Adrenal gland (tissue), 19 donors: ENCODE measurements at regions of chr17 and their contacts with region 1.

Region 1: DNA sequence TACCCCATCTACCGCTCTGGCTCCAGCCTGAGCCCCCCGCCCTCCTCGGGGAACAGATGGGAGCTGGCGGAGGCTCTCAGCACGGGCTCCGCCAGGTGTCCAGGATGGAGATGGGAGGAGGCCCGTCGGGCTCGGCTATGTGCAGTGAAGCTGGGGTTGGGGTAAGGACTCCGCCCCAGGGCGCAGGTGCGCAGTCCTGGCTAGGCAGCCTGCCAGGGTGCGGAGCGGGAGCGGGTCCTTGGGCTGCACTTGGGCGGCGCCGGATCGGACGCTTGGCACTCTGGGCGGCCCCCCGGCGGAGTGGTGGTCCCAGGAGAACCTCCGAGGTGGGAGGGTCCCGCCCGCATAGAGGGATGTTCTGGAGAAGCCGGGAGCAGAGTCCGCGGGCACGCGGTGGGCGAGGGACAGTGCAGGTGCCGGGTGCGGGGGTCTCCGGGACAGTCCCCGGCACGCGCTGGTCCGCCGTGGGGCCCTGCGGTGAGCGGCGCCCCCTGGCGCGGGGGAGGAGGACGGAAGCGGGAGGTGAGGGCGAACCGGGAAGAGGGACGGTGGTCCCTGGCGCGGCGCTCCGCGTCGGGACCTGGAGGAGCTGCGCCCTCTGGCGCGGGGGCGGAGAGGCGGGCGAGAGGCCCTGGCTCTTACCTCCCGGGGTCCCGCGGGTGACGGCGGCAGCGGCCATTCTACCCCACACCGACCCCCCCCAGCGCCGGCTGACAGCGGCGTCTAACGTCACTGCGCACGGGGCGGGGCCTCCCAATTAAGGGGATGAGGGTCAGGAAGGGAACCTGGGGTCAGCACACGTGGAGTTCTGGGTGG is at the start of gene CAMTA2:
- DNase-seq: peak; percentile 81 to 91 (median 86)
- H3K4me3 ChIP-seq: peak within 1 kb of the TSS; percentile 25 to 93 (median 66)
- H3K27ac ChIP-seq: peak within 1 kb of the TSS; percentile 15 to 95 (median 89)
- H3K4me1 ChIP-seq: peaks cover 13 to 24% of the 10 kb centered on the region in 2 donors
- H3K27me3 ChIP-seq: no peaks in the 10 kb centered on the region
- CTCF ChIP-seq: peak; percentile 27 to 70 (median 62)
- POLR2A ChIP-seq: peak; percentile 47 to 58
- total RNA-seq, gene CAMTA2: 6.9 to 70.6 (median 22.7) TPM

Region 2: DNA sequence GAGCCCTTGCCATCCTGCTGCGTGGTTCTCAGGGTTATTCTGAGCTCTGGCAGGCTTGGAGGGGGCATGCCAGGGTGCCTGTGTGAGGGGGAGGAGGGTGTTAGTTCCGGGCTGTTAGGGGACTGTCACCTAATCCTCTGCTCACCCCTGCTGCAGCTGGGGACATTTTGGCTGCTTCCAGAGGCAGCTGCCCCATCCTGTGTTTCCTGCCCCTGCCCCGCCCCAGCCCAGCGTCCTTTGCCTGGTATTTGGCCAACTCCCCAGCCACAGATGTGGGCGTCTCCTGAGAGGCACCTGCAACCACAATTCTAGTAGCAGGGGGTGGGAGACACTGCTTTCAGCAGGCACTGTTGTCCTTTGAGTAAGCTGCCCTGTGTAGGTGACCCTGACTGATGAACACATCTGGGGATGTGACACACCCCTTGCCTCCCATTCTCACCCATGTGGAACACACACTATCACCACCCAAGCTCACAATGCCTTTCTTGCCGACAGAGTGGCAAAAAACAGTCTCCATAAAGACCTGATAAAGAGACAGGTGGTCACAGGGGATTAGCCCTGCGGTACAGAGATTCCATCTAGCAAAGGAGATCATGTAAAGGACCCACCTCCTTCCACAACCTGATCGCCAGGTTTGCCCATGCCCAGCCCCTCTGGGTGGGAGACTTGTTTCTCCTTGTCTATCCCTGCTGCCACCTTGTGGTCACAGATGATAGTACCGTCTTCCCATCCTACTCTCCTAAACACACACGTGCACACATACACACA is 83.9 kb before region 1 on chr17 and contains the start of gene CHRNE:
- intact Hi-C with region 1: loop called in 1 of 2 experiments (anchors 10 kb)
- DNase-seq: peak; percentile 64 to 92 (median 83)
- H3K4me3 ChIP-seq: no peak within 1 kb of the TSS
- H3K27ac ChIP-seq: peak within 1 kb of the TSS in 2 of 5 donors; percentile 1 to 41
- H3K4me1 ChIP-seq: peaks cover 0 to 9% of the 10 kb centered on the region in 2 donors
- H3K27me3 ChIP-seq: no peaks in the 10 kb centered on the region
- CTCF ChIP-seq: peak; percentile 64 to 83 (median 76)
- POLR2A ChIP-seq: no peak
- total RNA-seq, gene CHRNE: 0.30 to 7.2 (median 0.55) TPM in 7 of 9 donors, not detected in the others

Region 3: GRCh38 chr17:4939796-4940624 is 47.1 kb before region 1 on chr17 and contains the starts of genes RNF167 and SLC25A11:
- intact Hi-C with region 1: loop called in 1 of 2 experiments (anchors 10 kb)
- DNase-seq: peak; percentile 94 to 99 (median 98)
- H3K4me3 ChIP-seq: peak within 1 kb of the TSS; percentile 50 to 95 (median 80)
- H3K27ac ChIP-seq: peak within 1 kb of the TSS; percentile 79 to 93 (median 90)
- H3K4me1 ChIP-seq: peaks cover 21 to 34% of the 10 kb centered on the region in 2 donors
- H3K27me3 ChIP-seq: no peaks in the 10 kb centered on the region
- CTCF ChIP-seq: no peak
- POLR2A ChIP-seq: peak in 1 of 2 donors; percentile 56
- total RNA-seq, gene RNF167: 46.7 to 130 (median 88.8) TPM
- total RNA-seq, gene SLC25A11: 60.2 to 77.7 (median 68.0) TPM

Region 4: GRCh38 chr17:5055543-5055942 is 68.4 kb after region 1 on chr17:
- intact Hi-C with region 1: loop called (anchors 5 to 10 kb)
- DNase-seq: no peak
- H3K4me3 ChIP-seq: no peak overlapping the region
- H3K27ac ChIP-seq: no peak overlapping the region
- H3K4me1 ChIP-seq: no peaks in the 10 kb centered on the region
- H3K27me3 ChIP-seq: no peaks in the 10 kb centered on the region
- CTCF ChIP-seq: no peak
- POLR2A ChIP-seq: no peak

Region 5: DNA sequence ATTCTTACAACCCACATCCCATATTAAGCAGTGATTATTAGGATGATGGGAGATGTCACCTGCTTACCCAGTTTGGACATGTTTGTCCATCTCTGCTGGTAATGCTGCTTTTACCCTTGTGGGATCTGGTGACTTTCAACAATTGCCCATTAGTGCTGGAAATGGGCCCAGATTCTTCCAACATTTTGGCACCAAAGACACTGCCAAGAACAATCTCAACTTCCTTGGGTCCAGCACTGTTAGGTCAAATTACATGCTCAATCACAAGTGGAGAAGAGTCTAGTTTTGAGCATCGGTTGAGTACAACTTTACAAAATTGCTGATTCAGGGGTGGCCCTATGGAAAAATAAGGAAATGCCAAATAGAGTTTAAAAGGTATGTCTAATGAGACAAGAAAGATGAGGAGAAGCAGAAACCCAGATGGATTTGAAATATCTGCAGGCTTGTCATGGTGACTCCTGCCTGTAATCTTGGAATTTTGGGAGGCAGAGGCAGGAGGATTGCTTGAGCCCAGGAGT is 78.1 kb after region 1 on chr17:
- intact Hi-C with region 1: loop called (anchors 5 to 10 kb)
- DNase-seq: no peak
- H3K4me3 ChIP-seq: no peak overlapping the region
- H3K27ac ChIP-seq: no peak overlapping the region
- H3K4me1 ChIP-seq: no peaks in the 10 kb centered on the region
- H3K27me3 ChIP-seq: no peaks in the 10 kb centered on the region
- CTCF ChIP-seq: no peak
- POLR2A ChIP-seq: no peak